Activated CD8-positive, alpha-beta memory T cell treated with anti-CD3 and anti-CD28 coated beads, Interleukin-2, amount 10 ng/mL, durations not matched to agents 7 days and 5 days (primary cell): ENCODE measurements at regions of chr19 and their contacts with region 1.

Region 1: GRCh38 chr19:47094557-47095475 is 18.8 kb downstream of the ZC3H4 start:
- DNase-seq: peak; percentile 84
- ATAC-seq: peak; percentile 72
- H3K4me3 Mint-ChIP-seq: peak overlapping the region; percentile 81
- H3K27ac Mint-ChIP-seq: peak overlapping the region; percentile 90
- H3K4me1 Mint-ChIP-seq: peaks cover 81% of the 10 kb centered on the region
- H3K27me3 Mint-ChIP-seq: no peaks in the 10 kb centered on the region

Region 2: DNA sequence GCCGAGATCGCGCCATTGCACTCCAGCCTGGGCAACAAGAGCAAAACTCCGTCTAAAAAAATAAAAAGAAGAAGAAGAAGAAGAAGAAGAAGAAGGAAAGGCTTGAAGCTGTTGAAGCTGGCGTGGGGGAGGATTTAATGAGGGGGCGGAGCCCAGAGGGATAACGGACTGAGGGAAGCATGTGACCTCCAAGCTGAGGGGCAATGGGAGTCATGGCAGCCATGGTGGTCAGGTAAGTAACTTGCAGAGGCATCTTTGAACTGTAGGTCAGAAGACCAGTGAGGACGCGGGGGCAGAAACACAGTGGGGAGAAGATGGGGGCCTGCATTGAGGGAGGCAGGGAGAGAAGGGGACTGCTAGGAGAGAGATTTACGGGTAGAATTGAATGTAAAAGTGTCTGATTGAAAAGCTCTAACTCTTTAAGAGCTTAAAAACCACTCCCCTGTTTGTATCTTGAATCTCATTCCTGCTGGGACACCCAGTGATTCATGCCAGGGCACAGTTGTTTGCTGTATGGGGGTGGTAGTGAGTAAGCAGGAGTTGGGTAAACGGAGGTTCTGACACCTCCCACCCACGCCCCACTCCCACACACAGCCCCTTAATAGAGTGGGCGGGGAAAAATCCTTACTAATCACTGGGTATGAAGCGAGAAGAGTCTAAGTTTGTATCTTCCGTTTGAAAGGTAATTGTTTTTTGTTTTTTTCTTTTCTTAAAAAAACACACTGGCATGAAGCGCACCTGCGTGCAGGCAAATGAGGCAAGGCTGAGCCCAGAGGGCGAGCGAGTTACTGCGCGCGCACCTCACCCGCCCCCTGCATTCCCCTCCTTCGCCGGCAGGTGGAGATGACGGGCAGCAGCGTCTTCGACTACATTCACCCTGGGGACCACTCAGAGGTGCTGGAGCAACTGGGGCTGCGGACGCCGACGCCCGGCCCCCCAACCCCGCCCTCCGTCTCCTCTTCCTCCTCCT is 59.4 kb before region 1 on chr19:
- CTCF ChIA-PET with region 1: interaction called, 13 read pairs
- DNase-seq: peak; percentile 96
- ATAC-seq: peak; percentile 93
- H3K4me3 Mint-ChIP-seq: peak overlapping the region; percentile 88
- H3K27ac Mint-ChIP-seq: peak overlapping the region; percentile 79
- H3K4me1 Mint-ChIP-seq: peaks cover 17% of the 10 kb centered on the region
- H3K27me3 Mint-ChIP-seq: peaks cover 27% of the 10 kb centered on the region

Region 3: DNA sequence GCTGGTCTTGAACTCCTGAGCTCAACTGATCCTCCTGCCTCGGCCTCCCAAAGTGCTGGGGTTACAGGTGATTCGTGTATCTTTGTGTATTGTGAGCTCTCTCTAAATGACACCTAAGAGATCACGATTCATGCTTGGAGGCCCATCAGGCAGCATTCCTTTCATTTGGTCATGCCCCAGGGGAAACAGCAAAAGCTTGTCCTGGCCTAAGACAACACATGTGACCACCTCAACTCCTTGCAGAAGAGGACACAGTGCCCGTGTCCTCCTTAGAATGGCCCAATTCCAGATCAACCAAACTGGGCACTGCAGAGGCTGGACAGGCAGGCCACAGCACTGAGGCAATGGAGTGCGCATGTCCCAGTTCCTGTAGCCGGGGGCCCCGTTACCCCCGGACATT is 13.7 kb before region 1 on chr19:
- CTCF ChIA-PET with region 1: interaction called, 25 read pairs
- DNase-seq: no peak
- ATAC-seq: no peak
- H3K4me3 Mint-ChIP-seq: no peak overlapping the region
- H3K27ac Mint-ChIP-seq: peak overlapping the region; percentile 36
- H3K4me1 Mint-ChIP-seq: no peaks in the 10 kb centered on the region
- H3K27me3 Mint-ChIP-seq: no peaks in the 10 kb centered on the region

Region 4: DNA sequence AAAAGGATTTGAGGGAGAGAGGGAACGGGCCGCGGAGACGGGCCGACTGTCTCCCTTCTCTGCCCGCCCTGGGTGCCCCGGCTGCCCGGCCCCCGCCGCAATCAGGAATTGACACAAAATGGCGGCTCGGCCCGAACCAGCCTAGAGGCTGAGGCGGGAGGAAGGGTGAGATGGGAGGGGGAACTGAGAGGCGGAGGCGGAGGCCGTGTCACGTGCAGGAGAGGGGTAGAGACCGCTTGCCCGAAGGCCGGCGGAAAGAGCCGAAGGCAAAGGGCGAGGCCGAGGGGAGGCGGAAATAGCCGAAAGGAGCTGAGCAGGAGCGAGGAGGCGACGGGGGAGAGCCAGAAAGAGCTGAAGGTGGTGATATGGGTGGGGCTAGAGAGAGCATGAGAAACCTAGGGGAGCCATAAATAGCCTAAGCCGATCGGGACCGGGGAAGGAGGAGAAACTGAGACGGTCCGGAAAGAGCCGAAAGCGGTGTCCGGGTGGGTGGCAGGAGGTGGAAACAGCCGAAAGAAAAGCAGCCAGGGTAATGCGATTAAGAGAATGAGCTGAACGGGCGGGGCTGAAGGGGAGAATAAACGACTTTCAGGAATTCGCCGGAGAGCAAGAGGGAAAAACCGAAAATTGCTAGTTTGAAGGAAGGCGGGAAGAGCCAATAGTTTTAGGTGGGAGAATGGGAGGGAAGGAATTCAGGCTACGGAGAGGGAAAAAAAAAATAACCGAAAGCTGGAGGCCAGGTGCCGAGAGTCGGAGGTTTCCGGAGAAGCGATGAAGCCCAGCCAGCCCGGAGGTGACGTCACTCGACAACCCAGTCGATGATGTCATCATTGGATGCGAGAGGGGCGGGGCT is 18.4 kb after region 1 on chr19 and contains the start of gene ZC3H4:
- CTCF ChIA-PET with region 1: interaction called, 36 read pairs
- DNase-seq: peak; percentile 100
- ATAC-seq: peak; percentile 86
- H3K4me3 Mint-ChIP-seq: peak within 1 kb of the TSS; percentile 95
- H3K27ac Mint-ChIP-seq: peak within 1 kb of the TSS; percentile 100
- H3K4me1 Mint-ChIP-seq: peaks cover 24% of the 10 kb centered on the region
- H3K27me3 Mint-ChIP-seq: no peaks in the 10 kb centered on the region
- total RNA-seq, gene ZC3H4: 98.9 to 114 TPM